A549 (cell line): ENCODE measurements at regions of chr1 and their contacts with region 1.

Region 1: GRCh38 chr1:148334339-148335130 is 148.6 kb downstream of the PPIAL4G start:
- DNase-seq: peak; percentile 53 to 93
- ATAC-seq: peak; percentile 90 to 92
- H3K4me3 ChIP-seq: peak overlapping the region; percentile 47
- H3K27ac ChIP-seq: peak overlapping the region; percentile 84 to 89
- H3K4me1 ChIP-seq: 0 out of 3 replicates have a peak, but pooled peaks cover 3% of the 10 kb centered on the region
- CTCF ChIP-seq: no peak
- EP300 ChIP-seq: no peak
- POLR2A ChIP-seq: peak; percentile 99
- RAD21 ChIP-seq: no peak

Region 2: DNA sequence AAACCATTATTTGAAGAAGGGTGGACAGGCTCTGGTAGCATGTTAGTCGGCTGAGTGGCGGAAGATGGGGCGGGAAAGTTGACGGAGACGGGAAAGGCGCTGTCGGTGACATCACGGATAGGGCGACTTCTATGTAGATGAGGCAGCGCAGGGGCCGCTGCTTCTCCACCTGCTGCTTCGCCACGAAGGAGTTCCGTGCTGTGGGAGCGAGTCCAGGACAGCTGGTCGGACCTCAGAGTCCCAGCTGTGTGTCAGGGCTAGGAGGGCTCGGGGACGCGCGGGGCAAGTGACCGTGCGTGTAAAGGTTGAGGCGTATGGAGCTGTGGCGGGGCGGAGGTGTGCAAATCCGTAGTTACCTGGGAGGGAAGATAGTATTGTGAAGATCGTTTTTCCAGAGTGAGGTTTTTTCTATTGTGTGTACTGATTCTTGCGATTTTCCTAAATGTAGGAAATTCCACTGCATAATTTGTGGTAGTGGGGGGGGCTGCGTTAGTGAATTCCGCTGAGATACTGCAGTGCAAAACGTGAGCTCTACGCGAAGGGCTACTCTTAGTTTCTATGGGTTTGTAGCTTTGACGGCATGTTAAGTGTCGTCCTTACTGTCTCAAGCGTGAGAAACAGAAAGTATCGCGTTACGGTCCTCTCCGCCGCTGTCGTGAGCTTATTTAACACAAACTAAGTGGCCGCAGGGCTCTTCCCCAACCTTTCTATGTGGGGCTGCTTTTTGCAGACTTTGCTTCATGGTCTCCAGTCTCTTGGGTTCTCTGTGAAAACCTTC is 71.2 kb before region 1 on chr1:
- CTCF ChIA-PET with region 1: no interaction called
- POLR2A ChIA-PET with region 1: interaction called, 104 read pairs
- DNase-seq: peak; percentile 65 to 92
- ATAC-seq: peak; percentile 72
- H3K4me3 ChIP-seq: peak overlapping the region; percentile 52
- H3K27ac ChIP-seq: peak overlapping the region; percentile 80 to 90
- H3K4me1 ChIP-seq: 0 out of 3 replicates have a peak, but pooled peaks cover 3% of the 10 kb centered on the region
- CTCF ChIP-seq: no peak
- EP300 ChIP-seq: no peak
- POLR2A ChIP-seq: peak; percentile 96
- RAD21 ChIP-seq: 0 out of 5 replicates have a peak, but pooled peaks of 1 of the 2 experiments have one; percentile 2

Region 3: GRCh38 chr1:148307583-148308190 is 26.8 kb before region 1 on chr1:
- CTCF ChIA-PET with region 1: no interaction called
- POLR2A ChIA-PET with region 1: interaction called, 22 read pairs
- DNase-seq: no peak
- ATAC-seq: no peak
- H3K4me3 ChIP-seq: no peak overlapping the region
- H3K27ac ChIP-seq: no peak overlapping the region
- H3K4me1 ChIP-seq: peaks cover 12% of the 10 kb centered on the region; the same call in 2 of the 3 replicates
- CTCF ChIP-seq: no peak
- EP300 ChIP-seq: no peak
- POLR2A ChIP-seq: no peak
- RAD21 ChIP-seq: no peak

Region 4: DNA sequence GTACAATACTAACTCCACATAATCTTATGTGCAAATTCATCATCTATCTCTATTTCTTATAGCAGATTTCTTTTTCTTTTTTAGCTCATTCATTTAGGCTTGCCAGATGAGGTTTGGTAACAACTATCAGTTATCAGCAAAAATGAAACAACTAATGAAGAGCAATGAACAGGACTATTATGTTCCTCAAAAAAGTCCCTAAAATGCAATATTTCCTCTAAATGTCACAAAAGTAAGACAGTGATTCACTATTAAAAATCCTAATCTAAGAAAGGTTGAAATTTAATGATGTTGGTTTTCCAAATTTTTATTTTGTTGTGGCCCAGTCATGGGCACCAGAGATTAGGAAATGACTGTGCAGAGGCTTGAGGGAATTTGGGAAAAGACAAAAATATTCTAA is 13.2 kb after region 1 on chr1:
- CTCF ChIA-PET with region 1: interaction called, 17 read pairs
- POLR2A ChIA-PET with region 1: interaction called, 3 read pairs
- DNase-seq: no peak
- ATAC-seq: no peak
- H3K4me3 ChIP-seq: no peak overlapping the region
- H3K27ac ChIP-seq: no peak overlapping the region
- H3K4me1 ChIP-seq: no peaks in the 10 kb centered on the region
- CTCF ChIP-seq: no peak
- EP300 ChIP-seq: no peak
- POLR2A ChIP-seq: no peak
- RAD21 ChIP-seq: no peak

Region 5: GRCh38 chr1:148362626-148363438 is 28.3 kb after region 1 on chr1:
- CTCF ChIA-PET with region 1: no interaction called
- POLR2A ChIA-PET with region 1: no interaction called
- DNase-seq: no peak
- ATAC-seq: no peak; a peak in 1 of 6 replicates
- H3K4me3 ChIP-seq: no peak overlapping the region
- H3K27ac ChIP-seq: no peak overlapping the region
- H3K4me1 ChIP-seq: peaks cover 4% of the 10 kb centered on the region; the same call in 1 of the 3 replicates
- CTCF ChIP-seq: no peak
- EP300 ChIP-seq: no peak
- POLR2A ChIP-seq: no peak
- RAD21 ChIP-seq: no peak

Region 6: GRCh38 chr1:148388260-148389027 is 53.9 kb after region 1 on chr1:
- CTCF ChIA-PET with region 1: no interaction called
- POLR2A ChIA-PET with region 1: interaction called, 28 read pairs
- DNase-seq: peak; percentile 94 to 97
- ATAC-seq: peak; percentile 92 to 96
- H3K4me3 ChIP-seq: peak overlapping the region; percentile 54
- H3K27ac ChIP-seq: peak overlapping the region; percentile 91 to 93
- H3K4me1 ChIP-seq: peaks cover 5% of the 10 kb centered on the region; the same call in 1 of the 3 replicates
- CTCF ChIP-seq: no peak
- EP300 ChIP-seq: no peak
- POLR2A ChIP-seq: peak; percentile 63
- RAD21 ChIP-seq: no peak